GM12878 (cell line): ENCODE measurements at regions of chr12 and their contacts with region 1.

Region 1: GRCh38 chr12:54251667-54252284 is 28.1 kb downstream of the CBX5 start:
- DNase-seq: no peak
- ATAC-seq: peak; percentile 91
- H3K4me3 ChIP-seq: no peak overlapping the region
- H3K27ac ChIP-seq: no peak overlapping the region
- H3K4me1 ChIP-seq: no peaks in the 10 kb centered on the region
- H3K27me3 ChIP-seq: no peaks in the 10 kb centered on the region
- CTCF ChIP-seq: peak; percentile 53 to 67 (median 64); a peak in 5 of 6 replicates
- EP300 ChIP-seq: no peak
- POLR2A ChIP-seq: no peak
- RAD21 ChIP-seq: peak; percentile 63

Region 2: DNA sequence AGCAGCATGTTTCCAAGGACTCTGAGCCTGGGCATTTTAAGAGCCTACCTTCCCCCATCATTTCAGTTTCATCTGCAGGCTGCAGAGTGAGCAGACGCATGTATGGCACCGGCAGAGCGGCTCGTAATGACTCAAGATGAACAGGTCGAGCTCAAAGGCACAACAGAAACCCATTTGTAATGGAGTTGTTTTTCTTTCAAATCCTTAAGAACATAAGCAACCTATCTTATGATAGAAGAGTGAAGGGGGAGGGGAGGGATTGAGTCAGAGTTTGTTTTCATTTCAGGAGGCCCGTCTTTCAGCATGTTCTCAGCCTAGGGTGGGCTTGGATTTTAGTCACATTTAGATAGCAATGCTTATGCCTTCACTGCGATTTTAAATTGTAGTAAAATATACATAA is 445.1 kb before region 1 on chr12:
- CTCF ChIA-PET with region 1: no interaction called
- POLR2A ChIA-PET with region 1: no interaction called
- RAD21 ChIA-PET with region 1: no interaction called
- SMC1A ChIA-PET with region 1: no interaction called
- in situ Hi-C with region 1: no loop called
- intact Hi-C with region 1: no loop called
- DNase-seq: no peak
- ATAC-seq: no peak
- H3K4me3 ChIP-seq: no peak overlapping the region
- H3K27ac ChIP-seq: no peak overlapping the region
- H3K4me1 ChIP-seq: no peaks in the 10 kb centered on the region
- H3K27me3 ChIP-seq: peaks cover 0 to 9% of the 10 kb centered on the region in 2 experiments
- CTCF ChIP-seq: no peak
- EP300 ChIP-seq: no peak
- POLR2A ChIP-seq: no peak
- RAD21 ChIP-seq: no peak

Region 3: DNA sequence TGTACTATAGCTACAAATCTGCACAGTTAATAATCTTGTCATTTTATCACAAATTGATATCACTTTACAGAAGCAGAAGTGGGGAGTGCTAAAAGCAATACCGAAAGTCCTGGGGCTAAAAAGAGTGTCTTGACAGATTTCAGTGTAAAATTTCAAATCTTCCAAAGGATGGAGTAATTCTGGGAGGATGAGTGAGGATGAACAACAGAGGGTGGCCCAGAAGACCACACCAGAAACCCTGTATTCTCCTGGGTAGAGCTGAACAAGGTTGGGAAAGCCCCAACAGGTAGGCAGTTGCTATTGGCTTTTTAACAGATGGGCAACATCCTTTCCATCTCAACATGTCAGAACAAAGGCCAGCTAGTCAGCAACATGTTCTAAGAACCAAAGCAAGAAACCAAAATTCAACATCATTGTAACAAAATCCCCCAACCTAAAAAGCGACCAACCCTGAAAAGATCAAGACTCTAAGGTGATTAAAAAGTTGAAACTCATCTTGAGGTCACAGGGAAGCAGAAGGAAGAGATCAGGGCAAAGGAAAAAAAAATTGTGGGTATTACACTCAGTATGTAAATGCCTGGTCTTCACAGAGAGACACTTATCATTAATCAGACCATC is 10.7 kb before region 1 on chr12:
- CTCF ChIA-PET with region 1: interaction called, 77 read pairs
- POLR2A ChIA-PET with region 1: interaction called, 6 read pairs
- RAD21 ChIA-PET with region 1: interaction called, 12 read pairs
- SMC1A ChIA-PET with region 1: interaction called, 19 read pairs
- in situ Hi-C with region 1: no loop called
- intact Hi-C with region 1: no loop called
- DNase-seq: peak; percentile 80
- ATAC-seq: peak; percentile 95
- H3K4me3 ChIP-seq: no peak overlapping the region
- H3K27ac ChIP-seq: peak overlapping the region; percentile 45
- H3K4me1 ChIP-seq: peaks cover 16% of the 10 kb centered on the region
- H3K27me3 ChIP-seq: no peaks in the 10 kb centered on the region
- CTCF ChIP-seq: no peak
- EP300 ChIP-seq: 0 out of 4 replicates have a peak, but pooled peaks of 1 of the 2 experiments have one; percentile 39
- POLR2A ChIP-seq: no peak
- RAD21 ChIP-seq: no peak

Region 4: DNA sequence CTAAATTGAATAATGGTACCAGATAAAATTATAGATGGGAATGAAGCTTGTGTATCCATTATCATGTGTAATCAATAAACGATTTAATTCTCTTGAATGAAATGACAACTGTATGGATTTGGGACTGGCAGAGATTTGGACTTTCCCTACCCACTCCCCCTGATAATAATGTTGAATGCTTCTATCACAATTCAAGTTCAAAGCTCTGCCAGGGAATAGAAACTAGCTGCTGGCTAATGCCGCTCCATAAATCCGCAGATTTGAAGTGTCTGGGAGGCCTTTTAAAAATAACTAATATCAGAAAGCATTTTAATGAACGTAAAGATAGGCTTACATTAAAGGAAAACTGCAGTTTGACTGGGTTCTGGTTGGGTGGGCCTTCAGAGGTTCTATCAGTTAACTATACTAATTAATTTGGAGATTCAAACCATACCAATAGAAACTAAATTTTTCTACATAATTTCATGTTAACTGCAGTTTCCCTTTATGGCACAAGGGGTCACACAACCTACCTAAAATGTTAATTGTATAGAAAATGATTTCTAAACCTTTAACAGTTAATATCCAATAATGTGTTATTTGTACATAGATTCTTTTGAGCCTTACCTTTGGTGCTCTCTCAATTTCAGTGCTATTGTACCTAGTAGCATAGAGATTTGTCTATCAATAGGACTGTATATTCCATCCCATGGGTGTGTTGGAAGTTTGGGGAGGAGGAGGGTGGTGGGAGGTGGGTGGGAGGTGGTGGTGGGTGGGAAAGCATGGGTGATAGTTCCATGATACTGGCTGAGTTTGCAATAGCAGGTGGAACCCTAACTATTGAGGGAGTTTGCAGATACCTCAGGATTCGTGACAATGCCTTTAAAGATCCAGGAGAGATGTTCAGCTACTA is 33.6 kb after region 1 on chr12:
- CTCF ChIA-PET with region 1: interaction called, 63 read pairs
- POLR2A ChIA-PET with region 1: interaction called, 16 read pairs
- RAD21 ChIA-PET with region 1: interaction called, 33 read pairs
- SMC1A ChIA-PET with region 1: interaction called, 32 read pairs
- in situ Hi-C with region 1: no loop called
- intact Hi-C with region 1: no loop called
- DNase-seq: no peak
- ATAC-seq: no peak
- H3K4me3 ChIP-seq: peak overlapping the region; percentile 37; the same call in 1 of the 2 replicates
- H3K27ac ChIP-seq: no peak overlapping the region
- H3K4me1 ChIP-seq: peaks cover 3% of the 10 kb centered on the region; the same call in 1 of the 2 replicates
- H3K27me3 ChIP-seq: no peaks in the 10 kb centered on the region
- CTCF ChIP-seq: peak in 1 of 3 experiments; percentile 23; a peak in 3 of 6 replicates
- EP300 ChIP-seq: no peak
- POLR2A ChIP-seq: no peak
- RAD21 ChIP-seq: no peak

Region 5: GRCh38 chr12:54337280-54337842 is 85.6 kb after region 1 on chr12:
- CTCF ChIA-PET with region 1: interaction called, 14 read pairs
- POLR2A ChIA-PET with region 1: no interaction called
- RAD21 ChIA-PET with region 1: no interaction called
- SMC1A ChIA-PET with region 1: no interaction called
- in situ Hi-C with region 1: no loop called
- intact Hi-C with region 1: no loop called
- DNase-seq: no peak
- ATAC-seq: no peak
- H3K4me3 ChIP-seq: no peak overlapping the region
- H3K27ac ChIP-seq: no peak overlapping the region
- H3K4me1 ChIP-seq: no peaks in the 10 kb centered on the region
- H3K27me3 ChIP-seq: no peaks in the 10 kb centered on the region
- CTCF ChIP-seq: 0 out of 6 replicates have a peak, but pooled peaks of 1 of the 3 experiments have one; percentile 5
- EP300 ChIP-seq: no peak
- POLR2A ChIP-seq: no peak
- RAD21 ChIP-seq: 0 out of 2 replicates have a peak, but pooled peaks have one; percentile 16

Region 6: GRCh38 chr12:54379401-54380201 is 127.8 kb after region 1 on chr12:
- CTCF ChIA-PET with region 1: interaction called, 14 read pairs
- POLR2A ChIA-PET with region 1: interaction called, 4 read pairs
- RAD21 ChIA-PET with region 1: interaction called, 8 read pairs
- SMC1A ChIA-PET with region 1: interaction called, 3 read pairs
- in situ Hi-C with region 1: no loop called
- intact Hi-C with region 1: no loop called
- DNase-seq: no peak
- ATAC-seq: peak; percentile 95
- H3K4me3 ChIP-seq: no peak overlapping the region
- H3K27ac ChIP-seq: no peak overlapping the region
- H3K4me1 ChIP-seq: peaks cover 4% of the 10 kb centered on the region
- H3K27me3 ChIP-seq: no peaks in the 10 kb centered on the region
- CTCF ChIP-seq: peak; percentile 100; a peak in 5 of 6 replicates
- EP300 ChIP-seq: no peak
- POLR2A ChIP-seq: no peak
- RAD21 ChIP-seq: peak; percentile 73